Activated CD4-positive, alpha-beta T cell treated with anti-CD3 and anti-CD28 coated beads, Interleukin-2, amount 10 ng/mL, durations not matched to agents 24 days and 14 days (primary cell): ENCODE measurements at regions of chr14 and their contacts with region 1.

Region 1: DNA sequence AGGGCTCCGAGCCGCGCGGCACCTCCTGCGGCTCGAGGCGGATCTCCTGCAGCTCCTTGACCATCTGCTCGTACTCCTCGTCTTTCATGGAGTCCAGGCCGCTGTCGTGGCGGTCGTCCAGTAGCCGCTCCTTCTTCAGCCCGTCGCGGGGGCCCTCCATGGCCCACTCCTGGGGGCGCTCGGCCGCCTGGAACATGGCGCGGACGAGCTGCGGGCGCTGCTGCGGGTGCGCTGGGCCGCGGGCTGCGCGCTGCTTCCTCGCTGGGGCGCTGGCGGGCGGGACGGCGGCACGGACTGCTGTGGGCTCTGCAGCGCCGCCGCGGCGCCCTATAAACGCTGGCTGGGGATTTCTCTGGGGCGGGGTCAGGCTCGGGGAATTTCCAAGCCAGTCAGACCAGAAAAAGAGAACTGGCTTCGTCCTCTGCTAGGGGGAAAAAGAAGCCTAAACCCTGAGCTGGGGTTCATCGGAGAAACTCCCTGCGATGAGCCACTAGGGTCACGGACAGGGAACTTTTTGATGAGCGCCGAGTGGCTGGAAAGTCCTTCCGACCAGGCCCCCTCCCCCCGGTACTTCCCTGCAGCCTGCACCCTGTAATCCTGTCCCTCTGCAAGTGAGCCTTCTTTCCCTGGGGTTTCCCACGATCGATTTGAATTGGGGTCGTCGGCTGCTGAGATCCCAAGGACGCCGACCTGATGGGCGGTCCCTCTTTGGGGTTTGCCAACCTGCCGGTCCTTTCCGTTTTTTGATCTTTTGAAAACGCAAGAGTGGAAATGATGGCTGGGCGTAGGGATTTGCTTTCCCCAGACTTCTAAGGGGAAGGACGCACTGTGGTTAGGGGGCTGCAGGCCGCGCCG is at the start of gene NFKBIA:
- DNase-seq: peak; percentile 99
- H3K4me3 Mint-ChIP-seq: peak within 1 kb of the TSS; percentile 97
- H3K27ac Mint-ChIP-seq: peak within 1 kb of the TSS; percentile 99
- H3K4me1 Mint-ChIP-seq: peaks cover 42% of the 10 kb centered on the region
- H3K27me3 Mint-ChIP-seq: no peaks in the 10 kb centered on the region
- total RNA-seq, gene NFKBIA: 506 and 534 TPM in 2 replicates

Region 2: DNA sequence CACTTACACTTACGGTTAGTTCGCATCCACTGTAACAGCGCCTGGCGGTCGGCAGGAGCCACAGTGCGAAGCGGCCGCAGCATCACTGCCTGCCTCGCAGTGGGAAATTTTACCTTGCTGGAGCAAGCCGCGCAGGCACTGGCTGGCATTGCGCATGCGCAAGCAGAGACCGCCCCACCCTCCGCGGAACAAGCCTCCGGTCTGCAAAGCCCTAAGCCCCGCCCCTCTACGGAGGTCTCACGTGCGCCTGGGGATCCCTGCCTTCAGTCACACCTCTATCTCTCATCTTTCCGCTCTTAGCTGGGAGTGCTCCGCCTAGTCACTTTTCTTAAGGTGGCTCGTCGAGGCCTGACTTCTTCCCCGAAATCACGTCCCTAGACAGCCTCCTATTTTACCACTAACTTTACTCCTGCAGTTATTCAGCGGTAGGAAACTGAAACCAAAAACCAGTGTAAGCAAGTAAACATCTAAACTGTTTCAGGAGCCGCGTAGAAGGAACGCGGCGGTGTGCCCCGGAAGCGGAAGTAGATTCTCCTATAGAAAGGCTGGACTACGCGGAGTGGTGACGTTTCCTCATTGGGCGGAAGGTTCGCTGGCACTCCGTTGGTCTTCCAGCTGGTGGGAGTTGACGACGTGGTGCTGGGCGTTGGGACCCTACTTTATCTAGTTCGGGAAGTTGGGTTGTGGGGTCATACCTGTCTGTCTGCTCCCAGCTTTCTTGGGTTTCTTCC is 422.1 kb before region 1 on chr14 and contains the start of gene SRP54:
- intact Hi-C with region 1: loop called (anchors 1 kb)
- DNase-seq: peak; percentile 100
- H3K4me3 Mint-ChIP-seq: no peak within 1 kb of the TSS
- H3K27ac Mint-ChIP-seq: no peak within 1 kb of the TSS
- H3K4me1 Mint-ChIP-seq: peaks cover 17% of the 10 kb centered on the region
- H3K27me3 Mint-ChIP-seq: no peaks in the 10 kb centered on the region
- total RNA-seq, gene SRP54: 73.6 and 73.8 TPM in 2 replicates

Region 3: DNA sequence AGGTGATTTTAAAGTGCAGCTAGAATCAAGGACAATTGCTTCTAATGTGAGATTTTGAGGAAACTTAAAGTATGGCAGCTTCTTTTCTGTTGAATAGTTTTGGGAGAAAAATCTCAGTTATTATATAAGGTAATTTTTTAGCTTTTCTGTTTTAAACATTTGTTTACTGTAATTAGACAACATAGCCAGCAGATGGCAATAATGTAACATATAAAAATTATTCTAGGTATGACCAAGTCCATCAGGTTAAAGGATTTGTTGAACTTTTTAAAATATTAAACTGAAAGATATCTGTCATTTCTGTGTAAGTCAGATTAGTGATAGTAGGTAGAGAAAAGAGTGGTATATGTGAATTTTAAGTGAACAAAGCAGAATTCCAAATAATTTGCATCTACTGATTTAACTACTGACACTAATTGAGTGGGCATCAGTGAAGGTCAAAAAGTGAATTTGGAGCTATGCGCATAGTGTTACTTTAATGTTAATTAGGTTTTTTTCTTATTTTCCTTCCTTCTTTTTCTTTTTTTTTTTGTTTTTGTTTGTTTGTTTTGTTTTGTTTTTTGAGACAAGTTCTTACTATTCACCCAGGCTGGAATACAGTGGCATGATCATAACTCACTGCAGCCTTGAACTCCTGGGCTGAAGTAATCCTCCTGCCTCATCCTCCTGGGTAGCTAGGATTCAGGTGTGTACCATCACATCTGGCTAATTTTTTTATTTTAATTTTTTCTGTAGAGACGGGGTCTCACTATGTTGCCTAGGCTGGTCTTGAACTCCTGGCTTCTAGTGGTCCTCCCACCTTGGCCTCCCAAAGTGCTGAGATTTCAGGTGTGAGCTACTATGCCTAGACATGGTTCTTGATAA is 263.7 kb before region 1 on chr14:
- intact Hi-C with region 1: loop called (anchors 2 kb)
- DNase-seq: no peak
- H3K4me3 Mint-ChIP-seq: no peak overlapping the region
- H3K27ac Mint-ChIP-seq: no peak overlapping the region
- H3K4me1 Mint-ChIP-seq: peaks cover 19% of the 10 kb centered on the region
- H3K27me3 Mint-ChIP-seq: no peaks in the 10 kb centered on the region

Region 4: GRCh38 chr14:35285168-35286002 is 119.3 kb before region 1 on chr14:
- intact Hi-C with region 1: loop called (anchors 1 kb)
- DNase-seq: peak; percentile 76
- H3K4me3 Mint-ChIP-seq: peak overlapping the region; percentile 78
- H3K27ac Mint-ChIP-seq: peak overlapping the region; percentile 97
- H3K4me1 Mint-ChIP-seq: peaks cover 52% of the 10 kb centered on the region
- H3K27me3 Mint-ChIP-seq: no peaks in the 10 kb centered on the region

Region 5: GRCh38 chr14:35331605-35332516 is 72.8 kb before region 1 on chr14:
- intact Hi-C with region 1: loop called (anchors 1 kb)
- DNase-seq: no peak
- H3K4me3 Mint-ChIP-seq: peak overlapping the region; percentile 79
- H3K27ac Mint-ChIP-seq: peak overlapping the region; percentile 91
- H3K4me1 Mint-ChIP-seq: peaks cover 30% of the 10 kb centered on the region
- H3K27me3 Mint-ChIP-seq: no peaks in the 10 kb centered on the region

Region 6: DNA sequence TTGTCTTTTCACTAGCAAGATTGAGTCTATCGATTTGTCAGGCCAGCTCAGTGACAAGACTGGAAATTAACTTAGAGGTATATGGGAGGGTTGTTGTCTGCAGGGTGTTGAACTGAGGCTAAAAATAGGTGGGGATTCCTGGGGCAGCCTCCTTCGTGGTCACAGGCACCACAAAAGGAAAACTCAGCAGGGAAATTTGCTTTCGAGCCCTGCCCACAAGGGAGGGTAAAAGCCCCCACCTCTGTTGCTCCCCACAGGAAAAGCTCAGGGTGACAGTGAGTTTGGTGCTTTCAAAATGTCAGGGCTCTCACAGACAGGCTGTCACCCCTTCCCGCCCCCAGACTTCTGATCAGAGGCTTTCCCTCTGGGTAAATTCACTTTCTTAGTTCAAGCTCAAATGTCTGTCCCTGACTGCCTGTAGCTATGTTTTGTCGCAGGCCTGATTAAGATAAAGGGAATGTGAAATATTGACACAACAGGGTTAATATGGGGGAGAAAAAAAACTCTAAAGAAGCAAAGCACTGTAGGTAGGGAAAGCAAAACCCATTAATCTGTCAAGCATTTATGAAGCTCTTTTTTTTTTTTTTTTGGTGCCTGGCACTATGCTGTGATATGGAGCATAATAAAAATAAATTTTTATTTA is 11.6 kb after region 1 on chr14:
- intact Hi-C with region 1: loop called (anchors 1 kb)
- DNase-seq: peak; percentile 90
- H3K4me3 Mint-ChIP-seq: peak overlapping the region; percentile 78
- H3K27ac Mint-ChIP-seq: peak overlapping the region; percentile 95
- H3K4me1 Mint-ChIP-seq: peaks cover 51% of the 10 kb centered on the region
- H3K27me3 Mint-ChIP-seq: peaks cover 4% of the 10 kb centered on the region

Region 7: DNA sequence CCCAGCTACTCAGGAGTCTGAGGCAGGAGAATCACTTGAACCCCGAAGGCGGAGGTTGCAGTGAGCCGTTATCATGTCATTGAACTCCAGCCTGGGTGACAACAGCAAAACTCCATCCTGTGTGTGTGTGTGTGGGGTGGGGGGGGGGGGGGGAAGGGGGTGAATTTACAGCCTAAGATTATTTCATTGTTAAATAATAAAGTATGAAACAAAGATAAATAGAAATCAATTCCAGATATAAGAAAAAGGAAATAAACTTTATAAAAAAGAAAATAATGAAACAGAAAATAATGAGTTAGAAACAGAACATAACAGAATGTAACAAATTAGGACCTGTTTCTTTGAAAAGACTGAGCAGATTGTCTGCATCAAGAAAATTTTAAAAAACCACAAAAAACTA is 212.8 kb after region 1 on chr14:
- intact Hi-C with region 1: no loop called
- DNase-seq: no peak
- H3K4me3 Mint-ChIP-seq: no peak overlapping the region
- H3K27ac Mint-ChIP-seq: no peak overlapping the region
- H3K4me1 Mint-ChIP-seq: no peaks in the 10 kb centered on the region
- H3K27me3 Mint-ChIP-seq: no peaks in the 10 kb centered on the region

Region 8: GRCh38 chr14:36091096-36091495 is 686.4 kb after region 1 on chr14:
- intact Hi-C with region 1: no loop called
- DNase-seq: no peak
- H3K4me3 Mint-ChIP-seq: no peak overlapping the region
- H3K27ac Mint-ChIP-seq: no peak overlapping the region
- H3K4me1 Mint-ChIP-seq: no peaks in the 10 kb centered on the region
- H3K27me3 Mint-ChIP-seq: peaks cover 3% of the 10 kb centered on the region